ENCODE measurements at regions of chr3 and their contacts with region 1.

Region 1: DNA sequence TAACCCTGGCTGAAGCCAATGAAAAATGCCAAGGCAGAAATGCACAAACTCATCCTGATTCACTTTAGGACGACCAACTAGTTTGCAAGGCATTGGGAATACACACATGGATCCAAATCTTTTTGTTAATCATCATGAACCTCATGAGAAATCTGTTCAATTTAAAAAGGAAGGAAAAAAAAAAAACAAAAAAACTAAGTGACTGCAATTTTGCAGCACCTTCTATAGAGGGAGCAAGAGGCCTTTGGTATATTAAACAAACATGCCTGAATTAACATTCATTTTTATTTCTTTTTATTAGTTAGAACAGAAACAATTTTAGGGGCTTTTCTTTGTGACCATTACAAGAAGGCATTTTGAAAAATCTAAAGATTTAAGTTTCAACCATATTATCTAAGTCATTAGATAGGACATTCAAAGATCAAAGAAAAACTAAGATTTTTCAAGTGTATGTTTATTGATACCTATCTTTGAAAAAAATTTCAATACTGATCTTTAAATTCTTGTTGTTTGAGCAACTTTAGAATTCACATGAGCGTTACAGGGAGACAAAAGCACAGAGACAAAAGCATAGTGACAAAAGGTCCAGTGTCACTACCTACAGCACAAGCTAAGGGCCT is 182.4 kb downstream of the CBLB start:
- DNase-seq: no peak
- ATAC-seq: no peak
- H3K4me3 ChIP-seq: no peak overlapping the region
- H3K27ac ChIP-seq: no peak overlapping the region
- H3K4me1 ChIP-seq: peaks cover 0 to 2% of the 10 kb centered on the region in 2 donors
- H3K27me3 ChIP-seq: no peaks in the 10 kb centered on the region
- CTCF ChIP-seq: peak in 4 of 5 experiments; percentile 33 to 73 (median 70)
- POLR2A ChIP-seq: no peak

Region 2: DNA sequence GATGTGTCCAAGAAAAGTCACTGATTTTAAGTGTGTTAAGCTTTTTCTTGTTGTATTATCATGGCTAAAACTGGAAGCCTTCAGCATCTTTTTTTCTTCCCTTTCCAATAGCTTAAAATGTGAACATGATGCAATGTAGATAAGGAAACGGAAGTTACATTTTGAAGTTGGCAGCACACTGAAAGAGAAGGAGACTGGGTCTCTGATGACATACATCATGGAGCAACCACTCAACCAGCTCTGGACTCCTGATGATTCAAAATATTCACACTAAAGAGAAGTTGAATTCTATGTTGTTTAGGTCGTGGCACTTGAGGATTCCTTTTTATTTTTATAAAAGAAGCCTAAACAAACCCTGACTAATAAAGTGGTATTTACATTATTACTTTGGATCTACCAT is 808.0 kb before region 1 on chr3:
- in situ Hi-C with region 1: no loop called
- intact Hi-C with region 1: no loop called
- DNase-seq: no peak
- ATAC-seq: no peak
- H3K4me3 ChIP-seq: no peak overlapping the region
- H3K27ac ChIP-seq: no peak overlapping the region
- H3K4me1 ChIP-seq: no peaks in the 10 kb centered on the region
- H3K27me3 ChIP-seq: no peaks in the 10 kb centered on the region
- CTCF ChIP-seq: no peak
- POLR2A ChIP-seq: no peak

Region 3: GRCh38 chr3:105827959-105828358 is 141.6 kb after region 1 on chr3:
- in situ Hi-C with region 1: no loop called
- intact Hi-C with region 1: no loop called
- DNase-seq: peak in 1 of 2 donors; percentile 45
- ATAC-seq: peak in 1 of 2 donors; percentile 85
- H3K4me3 ChIP-seq: no peak overlapping the region
- H3K27ac ChIP-seq: peak overlapping the region in 3 of 4 donors; percentile 24 to 67 (median 58)
- H3K4me1 ChIP-seq: peaks cover 18 to 65% of the 10 kb centered on the region in 2 donors
- H3K27me3 ChIP-seq: no peaks in the 10 kb centered on the region
- CTCF ChIP-seq: peak in 2 of 5 experiments; percentile 6 to 31
- POLR2A ChIP-seq: no peak

Region 4: GRCh38 chr3:106206146-106206545 is 519.8 kb after region 1 on chr3:
- in situ Hi-C with region 1: no loop called
- intact Hi-C with region 1: loop called (anchors 10 kb)
- DNase-seq: no peak
- ATAC-seq: peak; percentile 78 to 84
- H3K4me3 ChIP-seq: peak overlapping the region in 3 of 4 donors; percentile 5 to 38 (median 6)
- H3K27ac ChIP-seq: peak overlapping the region; percentile 22 to 60 (median 41)
- H3K4me1 ChIP-seq: peaks cover 18 to 37% of the 10 kb centered on the region in 2 donors
- H3K27me3 ChIP-seq: no peaks in the 10 kb centered on the region
- CTCF ChIP-seq: no peak
- POLR2A ChIP-seq: no peak

Region 5: DNA sequence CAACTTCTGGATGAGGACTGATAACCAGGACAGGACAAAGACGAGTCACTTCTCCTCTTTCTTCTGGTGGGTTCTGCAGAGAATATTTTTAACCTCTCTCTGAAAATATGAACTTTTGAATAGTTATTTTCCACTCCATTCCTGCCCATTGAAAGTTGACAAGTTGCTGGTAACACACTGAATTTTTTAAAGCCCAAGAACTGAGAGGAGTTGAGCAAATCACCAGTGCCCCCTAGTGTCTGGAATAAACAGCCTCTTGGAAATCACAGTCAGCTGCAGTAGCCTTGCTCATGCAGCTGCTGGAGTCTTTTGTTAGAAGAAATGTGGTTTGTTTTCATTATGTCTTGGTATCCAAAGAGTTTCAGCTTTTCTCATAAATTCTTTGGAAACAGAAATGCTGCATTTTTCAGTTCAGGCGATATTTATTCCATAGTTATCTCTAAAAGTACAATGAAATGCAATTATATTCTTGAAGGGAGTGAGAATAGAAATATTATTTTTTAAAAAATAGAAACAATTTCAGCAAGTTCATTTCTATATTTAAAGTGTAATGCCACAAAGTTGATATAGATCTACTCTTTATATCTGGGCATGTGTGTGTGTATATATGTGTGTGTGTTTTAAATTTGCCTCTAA is 923.4 kb after region 1 on chr3:
- in situ Hi-C with region 1: loop called (anchors 10 to 25 kb)
- intact Hi-C with region 1: loop called (anchors 2 kb)
- DNase-seq: peak; percentile 21 to 55
- ATAC-seq: peak; percentile 85 to 92
- H3K4me3 ChIP-seq: peak overlapping the region in 1 of 4 donors; percentile 9
- H3K27ac ChIP-seq: no peak overlapping the region
- H3K4me1 ChIP-seq: no peaks in the 10 kb centered on the region
- H3K27me3 ChIP-seq: no peaks in the 10 kb centered on the region
- CTCF ChIP-seq: peak; percentile 68 to 89 (median 77)
- POLR2A ChIP-seq: no peak

Region 6: DNA sequence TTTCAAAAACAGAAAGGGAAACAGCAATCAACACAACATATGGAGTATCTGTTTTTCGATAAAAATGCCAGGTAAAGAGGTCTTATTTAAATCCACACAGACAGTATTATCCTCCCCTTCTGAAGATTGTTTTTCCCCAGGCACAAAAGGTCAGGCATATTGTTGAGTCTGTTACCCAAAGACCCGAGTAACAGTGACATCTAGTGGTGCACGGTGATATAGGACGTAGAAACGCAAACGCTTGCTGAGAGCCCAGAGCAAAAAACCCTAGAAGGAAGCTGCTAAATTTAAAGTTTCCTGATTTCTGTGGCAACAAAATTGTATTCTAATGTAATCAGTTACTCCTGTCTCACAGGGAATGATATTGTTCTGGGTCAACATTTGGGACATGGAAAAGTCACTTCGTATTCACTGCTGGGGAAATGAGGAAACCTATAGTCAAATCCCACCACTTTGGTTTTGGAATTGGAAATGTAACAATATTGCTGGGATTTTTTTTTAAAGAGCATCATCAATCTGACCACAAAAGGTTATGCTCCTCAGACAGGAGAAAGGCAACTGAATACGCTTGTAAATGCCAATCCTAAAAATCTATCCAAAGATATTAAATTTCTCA is 1378.2 kb after region 1 on chr3:
- in situ Hi-C with region 1: loop called in 1 of 4 experiments (anchors 25 kb)
- intact Hi-C with region 1: no loop called
- DNase-seq: peak; percentile 21 to 44
- ATAC-seq: peak; percentile 81 to 92
- H3K4me3 ChIP-seq: no peak overlapping the region
- H3K27ac ChIP-seq: no peak overlapping the region
- H3K4me1 ChIP-seq: peaks cover 0 to 3% of the 10 kb centered on the region in 2 donors
- H3K27me3 ChIP-seq: no peaks in the 10 kb centered on the region
- CTCF ChIP-seq: peak; percentile 29 to 80 (median 53)
- POLR2A ChIP-seq: no peak